Naive thymus-derived CD4-positive, alpha-beta T cell (primary cell): ENCODE measurements at regions of chr12 and their contacts with region 1.

Region 1: GRCh38 chr12:56117778-56118687 is at the start of gene ZC3H10:
- DNase-seq: peak; percentile 80 to 99 (median 96)
- ATAC-seq: peak; percentile 89
- H3K4me3 ChIP-seq: peak within 1 kb of the TSS; percentile 95
- H3K4me3 Mint-ChIP-seq: peak within 1 kb of the TSS; percentile 87 to 100 (median 96)
- H3K27ac ChIP-seq: peak within 1 kb of the TSS; percentile 93
- H3K27ac Mint-ChIP-seq: peak within 1 kb of the TSS; percentile 95 to 99 (median 98)
- H3K4me1 ChIP-seq: peaks cover 24 to 25% of the 10 kb centered on the region in 2 donors
- H3K4me1 Mint-ChIP-seq: peaks cover 24 to 47% (median 34%) of the 10 kb centered on the region in 7 donors
- H3K27me3 ChIP-seq: no peaks in the 10 kb centered on the region
- H3K27me3 Mint-ChIP-seq: no peaks in the 10 kb centered on the region
- total RNA-seq, gene ZC3H10: 7.8 to 16.3 (median 13.3) TPM

Region 2: DNA sequence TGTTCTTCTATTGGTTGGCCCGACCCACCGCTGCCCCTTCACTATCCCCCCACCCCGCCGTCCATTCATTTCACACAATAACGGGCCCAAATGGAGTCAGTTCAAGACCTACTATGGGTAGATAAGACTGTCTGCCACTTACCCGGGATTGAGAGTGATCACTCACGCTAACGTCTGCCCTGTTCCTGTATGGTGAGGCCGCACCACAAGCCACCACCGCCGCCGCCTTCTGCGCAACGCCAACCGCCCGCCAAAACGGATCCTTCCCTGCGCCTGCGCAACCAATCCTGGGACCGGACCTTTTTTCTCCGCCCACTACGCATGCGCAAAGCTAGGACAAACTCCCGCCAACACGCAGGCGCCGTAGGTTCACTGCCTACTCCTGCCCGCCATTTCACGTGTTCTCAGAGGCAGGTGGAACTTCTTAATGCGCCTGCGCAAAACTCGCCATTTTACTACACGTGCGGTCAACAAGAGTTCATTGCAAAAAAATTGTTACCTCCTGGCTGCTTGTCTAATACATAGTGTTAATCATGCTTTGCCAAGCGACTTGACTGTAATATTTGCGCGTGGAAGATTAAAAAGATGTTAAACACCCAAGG is 1838.1 kb before region 1 on chr12 and contains the start of gene CBX5:
- CTCF ChIA-PET with region 1: no interaction called
- POLR2A ChIA-PET with region 1: no interaction called
- intact Hi-C with region 1: loop called in 1 of 2 experiments (anchors 2 kb)
- DNase-seq: peak; percentile 98 to 100 (median 100)
- ATAC-seq: peak; percentile 63
- H3K4me3 ChIP-seq: peak within 1 kb of the TSS; percentile 97
- H3K4me3 Mint-ChIP-seq: no peak within 1 kb of the TSS
- H3K27ac ChIP-seq: peak within 1 kb of the TSS; percentile 92
- H3K27ac Mint-ChIP-seq: no peak within 1 kb of the TSS
- H3K4me1 ChIP-seq: peaks cover 46 to 52% of the 10 kb centered on the region in 2 donors
- H3K4me1 Mint-ChIP-seq: peaks cover 16 to 57% (median 47%) of the 10 kb centered on the region in 7 donors
- H3K27me3 ChIP-seq: no peaks in the 10 kb centered on the region
- H3K27me3 Mint-ChIP-seq: no peaks in the 10 kb centered on the region
- total RNA-seq, gene CBX5: 40.3 to 133 (median 77.2) TPM

Region 3: GRCh38 chr12:55687746-55688145 is 430.3 kb before region 1 on chr12:
- CTCF ChIA-PET with region 1: no interaction called
- POLR2A ChIA-PET with region 1: no interaction called
- intact Hi-C with region 1: no loop called
- DNase-seq: no peak
- ATAC-seq: no peak
- H3K4me3 ChIP-seq: no peak overlapping the region
- H3K4me3 Mint-ChIP-seq: no peak overlapping the region
- H3K27ac ChIP-seq: no peak overlapping the region
- H3K27ac Mint-ChIP-seq: no peak overlapping the region
- H3K4me1 ChIP-seq: no peaks in the 10 kb centered on the region
- H3K4me1 Mint-ChIP-seq: peaks cover 0 to 11% (median 2%) of the 10 kb centered on the region in 7 donors
- H3K27me3 ChIP-seq: no peaks in the 10 kb centered on the region
- H3K27me3 Mint-ChIP-seq: peaks cover 0 to 10% (median 5%) of the 10 kb centered on the region in 5 donors

Region 4: DNA sequence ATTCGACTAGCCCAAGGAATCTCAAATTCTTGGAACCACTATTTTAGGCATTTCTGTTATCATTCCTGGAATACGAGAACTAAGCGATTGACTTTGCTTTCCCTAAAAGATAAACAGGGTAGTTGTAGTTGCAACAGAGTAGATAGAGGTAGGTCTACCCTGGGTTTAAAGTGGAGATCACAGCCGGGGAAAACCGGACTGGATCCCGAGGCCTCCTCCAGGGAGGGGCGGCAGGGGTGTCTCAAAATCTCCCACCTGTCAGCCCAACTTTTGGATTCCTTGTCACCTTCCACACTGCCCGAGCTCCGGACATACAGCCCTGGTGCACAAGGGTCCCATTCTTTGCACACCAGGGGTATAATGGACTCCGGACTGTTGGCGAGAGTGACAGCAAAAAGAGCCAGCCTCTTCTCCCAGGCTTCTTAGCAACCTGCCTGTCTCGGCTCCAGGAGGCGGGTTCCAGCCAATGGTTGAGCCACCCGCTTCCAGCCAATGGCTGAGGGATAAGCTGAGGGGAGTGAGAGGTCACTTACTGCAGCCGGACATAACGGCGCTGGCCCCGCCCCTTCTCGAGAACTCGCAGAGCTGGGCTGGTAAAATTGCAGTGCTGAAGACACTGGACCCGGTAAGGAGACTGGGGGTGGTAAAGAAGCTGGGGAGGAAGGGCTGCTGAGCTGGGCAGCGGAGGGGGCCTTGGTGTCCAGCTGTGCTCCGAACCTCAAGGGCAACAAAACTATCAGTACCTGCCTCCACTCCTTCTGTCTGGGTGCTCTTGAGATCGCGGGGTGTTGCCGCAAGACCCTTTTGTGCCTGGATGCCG is 121.1 kb before region 1 on chr12 and contains the start of gene SUOX:
- CTCF ChIA-PET with region 1: no interaction called
- POLR2A ChIA-PET with region 1: no interaction called
- intact Hi-C with region 1: loop called (anchors 2 to 5 kb)
- DNase-seq: peak in 3 of 9 donors; percentile 8 to 58 (median 31)
- ATAC-seq: peak; percentile 93
- H3K4me3 ChIP-seq: no peak within 1 kb of the TSS
- H3K4me3 Mint-ChIP-seq: peak within 1 kb of the TSS; percentile 49 to 87 (median 62)
- H3K27ac ChIP-seq: no peak within 1 kb of the TSS
- H3K27ac Mint-ChIP-seq: peak within 1 kb of the TSS in 7 of 9 donors; percentile 19 to 78 (median 63)
- H3K4me1 ChIP-seq: peaks cover 0 to 14% of the 10 kb centered on the region in 2 donors
- H3K4me1 Mint-ChIP-seq: peaks cover 8 to 37% (median 16%) of the 10 kb centered on the region in 7 donors
- H3K27me3 ChIP-seq: no peaks in the 10 kb centered on the region
- H3K27me3 Mint-ChIP-seq: peaks cover 0 to 4% (median 0%) of the 10 kb centered on the region in 5 donors
- total RNA-seq, gene SUOX: 1.9 to 10.4 (median 7.1) TPM

Region 5: DNA sequence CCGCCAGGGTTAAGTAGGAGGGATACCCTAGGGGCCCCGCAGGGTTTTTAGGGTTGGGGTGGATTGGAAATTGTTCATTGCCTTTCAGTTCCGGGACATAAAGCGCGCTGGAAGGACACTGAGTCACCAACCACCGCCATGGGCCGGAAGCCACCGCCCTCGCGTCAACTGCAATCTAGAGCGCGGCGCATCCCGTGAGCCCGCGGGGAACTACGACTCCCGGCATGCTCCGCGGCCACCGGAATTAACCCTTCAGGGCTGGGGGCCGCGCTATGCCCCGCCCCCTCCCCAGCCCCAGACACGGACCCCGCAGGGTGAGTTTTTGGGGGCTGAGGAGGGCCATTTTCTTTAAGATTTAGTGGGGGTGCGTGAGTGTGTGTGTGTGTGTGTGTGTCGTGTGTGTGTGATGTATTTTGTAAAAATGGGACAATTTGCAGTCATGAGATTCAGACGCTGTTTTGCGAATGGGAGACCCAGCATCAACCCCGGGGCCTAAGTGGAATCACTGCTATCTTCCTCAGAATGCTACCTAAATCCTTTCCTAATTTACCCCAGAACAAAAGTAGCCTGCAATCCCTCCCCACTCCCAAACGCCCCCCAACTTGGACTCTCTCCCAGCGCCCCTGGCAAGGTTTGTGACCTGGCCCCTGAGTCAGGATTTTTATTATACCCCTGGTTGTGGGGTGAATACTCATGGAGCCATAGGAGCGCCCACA is 34.4 kb after region 1 on chr12 and contains the start of gene MYL6B:
- CTCF ChIA-PET with region 1: interaction called, 4 read pairs
- POLR2A ChIA-PET with region 1: interaction called, 161 read pairs
- intact Hi-C with region 1: loop called (anchors 1 kb)
- DNase-seq: peak; percentile 79 to 94 (median 87)
- ATAC-seq: peak; percentile 98
- H3K4me3 ChIP-seq: peak within 1 kb of the TSS; percentile 86
- H3K4me3 Mint-ChIP-seq: peak within 1 kb of the TSS; percentile 80 to 96 (median 92)
- H3K27ac ChIP-seq: peak within 1 kb of the TSS; percentile 80
- H3K27ac Mint-ChIP-seq: peak within 1 kb of the TSS; percentile 84 to 99 (median 97)
- H3K4me1 ChIP-seq: peaks cover 22 to 25% of the 10 kb centered on the region in 2 donors
- H3K4me1 Mint-ChIP-seq: peaks cover 17 to 55% (median 39%) of the 10 kb centered on the region in 7 donors
- H3K27me3 ChIP-seq: no peaks in the 10 kb centered on the region
- H3K27me3 Mint-ChIP-seq: no peaks in the 10 kb centered on the region
- total RNA-seq, gene MYL6B: 3.7 to 60.3 (median 8.9) TPM

Region 6: DNA sequence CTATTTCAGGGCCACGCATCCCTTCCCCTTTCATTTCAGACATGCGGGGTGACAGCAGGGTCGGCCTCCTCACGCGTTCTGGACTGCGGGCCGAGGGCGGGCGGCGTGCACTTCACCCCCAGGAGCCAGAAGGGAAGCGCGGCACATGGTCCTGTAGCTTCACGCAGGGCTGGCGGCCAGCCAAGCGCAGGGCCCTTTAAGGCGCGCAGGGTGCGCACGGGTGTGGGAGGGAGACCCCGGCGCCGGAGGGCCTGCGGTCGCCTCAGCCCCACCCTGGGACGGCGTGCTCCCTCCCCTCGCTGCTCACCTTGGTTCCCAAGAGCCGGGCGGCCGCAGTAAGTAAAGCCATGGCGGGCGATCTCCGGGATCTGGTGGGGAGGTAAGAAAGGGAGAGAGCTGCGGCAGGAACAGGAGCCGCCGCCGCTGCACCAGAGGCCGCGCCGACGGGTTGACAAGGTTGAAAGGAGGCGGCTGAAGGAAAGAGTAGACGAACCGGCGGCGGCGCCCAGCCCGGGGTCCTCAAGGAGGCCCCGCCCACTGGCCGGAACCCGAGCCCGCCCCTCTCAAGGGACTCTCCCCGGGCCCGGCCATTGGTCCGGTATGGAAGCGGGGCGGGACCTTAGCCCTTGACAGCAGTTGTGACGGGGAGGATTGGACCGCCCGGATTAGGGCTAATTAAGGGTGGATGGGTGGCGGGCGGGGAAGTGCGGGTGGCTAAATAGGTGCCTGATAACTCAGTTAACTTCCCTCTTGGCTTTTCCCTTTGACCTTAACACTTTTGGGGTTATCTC is 182.0 kb after region 1 on chr12 and contains the start of gene CS:
- CTCF ChIA-PET with region 1: no interaction called
- POLR2A ChIA-PET with region 1: interaction called, 4 read pairs
- intact Hi-C with region 1: loop called (anchors 1 kb)
- DNase-seq: peak; percentile 95 to 99 (median 98)
- ATAC-seq: peak; percentile 98
- H3K4me3 ChIP-seq: peak within 1 kb of the TSS; percentile 73
- H3K4me3 Mint-ChIP-seq: peak within 1 kb of the TSS; percentile 93 to 100 (median 96)
- H3K27ac ChIP-seq: peak within 1 kb of the TSS; percentile 94
- H3K27ac Mint-ChIP-seq: peak within 1 kb of the TSS; percentile 93 to 99 (median 97)
- H3K4me1 ChIP-seq: peaks cover 26 to 48% of the 10 kb centered on the region in 2 donors
- H3K4me1 Mint-ChIP-seq: peaks cover 27 to 58% (median 53%) of the 10 kb centered on the region in 7 donors
- H3K27me3 ChIP-seq: no peaks in the 10 kb centered on the region
- H3K27me3 Mint-ChIP-seq: no peaks in the 10 kb centered on the region
- total RNA-seq, gene CS: 126 to 241 (median 167) TPM

Region 7: DNA sequence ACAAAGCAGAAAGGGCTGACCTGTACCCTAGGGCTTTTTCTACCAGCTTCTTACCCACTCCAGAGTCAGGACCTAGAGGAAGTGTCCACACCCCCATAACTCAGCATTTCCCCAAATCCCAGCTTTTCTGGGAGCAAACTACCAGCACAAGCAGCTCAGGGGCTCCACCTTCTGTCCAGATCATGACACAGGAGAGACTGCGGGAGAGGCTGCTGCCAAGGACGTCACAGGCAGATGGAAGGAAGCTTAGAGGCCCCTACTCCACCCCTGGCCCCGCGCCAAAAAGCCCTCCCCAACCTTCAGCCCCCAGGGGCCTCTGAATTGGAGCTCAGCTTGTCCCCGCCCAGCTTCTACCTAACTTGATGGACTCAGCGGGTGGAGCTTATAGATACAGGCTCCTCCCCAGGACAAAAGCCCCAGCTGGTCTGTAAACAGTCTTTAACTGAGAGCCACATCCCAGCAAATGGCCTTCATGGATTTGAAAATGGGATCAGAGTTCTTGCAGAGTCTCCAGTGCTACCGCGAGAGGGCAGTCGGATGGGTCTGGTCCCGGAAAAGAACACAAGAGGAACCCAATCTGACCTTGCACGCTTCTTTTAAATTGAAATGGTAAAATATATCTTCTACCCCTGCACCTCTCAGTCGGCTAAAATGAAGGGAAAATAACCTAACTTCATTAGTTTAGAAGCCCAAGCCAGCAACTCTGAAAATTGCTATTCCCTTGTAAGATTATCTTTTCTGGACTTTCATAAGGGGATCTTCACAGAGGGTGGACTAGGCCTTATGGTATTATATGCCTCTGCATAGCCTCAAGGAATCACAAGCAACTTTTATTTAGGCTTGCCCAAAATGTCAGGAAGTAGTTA is 518.9 kb after region 1 on chr12:
- CTCF ChIA-PET with region 1: no interaction called
- POLR2A ChIA-PET with region 1: no interaction called
- intact Hi-C with region 1: loop called (anchors 5 to 10 kb)
- DNase-seq: peak; percentile 86 to 99 (median 94)
- ATAC-seq: peak; percentile 83
- H3K4me3 ChIP-seq: peak overlapping the region; percentile 73
- H3K4me3 Mint-ChIP-seq: peak overlapping the region; percentile 87 to 100 (median 96)
- H3K27ac ChIP-seq: peak overlapping the region; percentile 83
- H3K27ac Mint-ChIP-seq: peak overlapping the region; percentile 89 to 99 (median 97)
- H3K4me1 ChIP-seq: peaks cover 27 to 36% of the 10 kb centered on the region in 2 donors
- H3K4me1 Mint-ChIP-seq: peaks cover 28 to 69% (median 57%) of the 10 kb centered on the region in 7 donors
- H3K27me3 ChIP-seq: no peaks in the 10 kb centered on the region
- H3K27me3 Mint-ChIP-seq: no peaks in the 10 kb centered on the region

Region 8: DNA sequence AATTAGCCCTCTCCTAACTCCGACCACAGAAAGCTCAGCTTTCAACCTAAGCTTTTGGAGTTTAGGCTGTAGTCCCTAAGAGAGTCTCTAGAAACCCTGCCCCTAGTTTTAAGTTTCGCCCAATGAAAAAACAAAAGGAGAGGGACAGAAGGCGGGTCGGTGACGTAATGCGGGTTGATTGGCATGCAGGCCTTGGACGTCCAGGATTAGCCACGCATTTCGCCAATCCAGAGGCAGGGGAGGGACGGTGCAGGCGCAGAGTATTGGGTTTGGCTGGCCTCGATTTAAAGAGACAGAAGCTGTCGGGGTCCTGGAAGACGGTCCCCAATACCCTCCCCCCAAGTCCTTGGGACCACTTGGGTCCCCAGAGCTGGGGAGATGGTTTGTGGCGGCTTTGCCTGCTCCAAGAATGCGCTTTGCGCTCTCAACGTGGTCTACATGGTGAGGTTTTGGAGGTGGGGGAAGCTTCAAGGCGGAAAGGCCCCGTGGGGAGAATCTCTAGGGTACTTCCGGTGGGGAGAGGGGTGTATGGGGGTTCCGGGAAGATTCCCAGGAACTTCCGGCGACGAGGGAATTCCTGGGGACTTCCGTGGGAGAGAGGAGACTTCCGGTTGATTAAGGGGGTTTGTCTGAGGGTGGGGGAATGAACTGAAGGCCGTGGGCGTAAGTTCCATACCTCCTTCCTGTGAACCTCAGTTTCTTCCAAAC is 1626.9 kb after region 1 on chr12 and contains the start of gene TSPAN31:
- CTCF ChIA-PET with region 1: no interaction called
- POLR2A ChIA-PET with region 1: no interaction called
- intact Hi-C with region 1: loop called (anchors 5 kb)
- DNase-seq: peak; percentile 70 to 97 (median 94)
- ATAC-seq: peak; percentile 89
- H3K4me3 ChIP-seq: peak within 1 kb of the TSS; percentile 92
- H3K4me3 Mint-ChIP-seq: peak within 1 kb of the TSS; percentile 82 to 100 (median 91)
- H3K27ac ChIP-seq: peak within 1 kb of the TSS; percentile 91
- H3K27ac Mint-ChIP-seq: peak within 1 kb of the TSS; percentile 88 to 97 (median 95)
- H3K4me1 ChIP-seq: peaks cover 33 to 34% of the 10 kb centered on the region in 2 donors
- H3K4me1 Mint-ChIP-seq: peaks cover 35 to 64% (median 52%) of the 10 kb centered on the region in 7 donors
- H3K27me3 ChIP-seq: no peaks in the 10 kb centered on the region
- H3K27me3 Mint-ChIP-seq: no peaks in the 10 kb centered on the region
- total RNA-seq, gene TSPAN31: 12.3 to 23.9 (median 20.3) TPM